Mammary epithelial cell (primary cell): ENCODE measurements at regions of chr20 and their contacts with region 1.

Region 1: GRCh38 chr20:44747166-44748004 is 1.7 kb downstream of the KCNK15 start:
- DNase-seq: peak; percentile 87
- H3K4me3 ChIP-seq: no peak overlapping the region
- H3K27ac ChIP-seq: no peak overlapping the region
- H3K4me1 ChIP-seq: peaks cover 18% of the 10 kb centered on the region
- H3K27me3 ChIP-seq: peaks cover 7% of the 10 kb centered on the region
- CTCF ChIP-seq: peak; percentile 77 to 79

Region 2: DNA sequence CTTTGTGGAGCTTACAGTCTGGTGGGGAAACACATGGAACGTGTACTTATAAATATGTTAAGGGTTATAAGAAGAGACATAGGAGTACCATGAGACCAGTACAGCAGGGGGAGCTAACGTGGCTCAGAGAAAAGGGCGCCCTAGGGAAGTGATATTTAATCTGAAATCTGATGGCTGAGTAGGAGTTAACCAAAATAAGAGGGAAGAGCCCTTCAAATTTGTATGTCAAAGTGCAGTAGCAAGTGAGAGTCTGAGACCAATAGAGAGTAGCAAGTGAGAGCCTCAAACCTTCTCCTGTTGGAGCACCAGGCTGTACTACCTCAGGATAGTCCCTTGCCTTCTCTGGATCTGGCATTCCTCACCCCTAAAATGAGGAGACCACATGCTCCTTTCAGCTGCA is 171.1 kb before region 1 on chr20:
- CTCF ChIA-PET with region 1: no interaction called
- dilution Hi-C with region 1: no loop called
- in situ Hi-C with region 1: no loop called
- intact Hi-C with region 1: no loop called
- DNase-seq: no peak
- H3K4me3 ChIP-seq: no peak overlapping the region
- H3K27ac ChIP-seq: peak overlapping the region; percentile 13
- H3K4me1 ChIP-seq: peaks cover 24% of the 10 kb centered on the region
- H3K27me3 ChIP-seq: no peaks in the 10 kb centered on the region
- CTCF ChIP-seq: no peak

Region 3: DNA sequence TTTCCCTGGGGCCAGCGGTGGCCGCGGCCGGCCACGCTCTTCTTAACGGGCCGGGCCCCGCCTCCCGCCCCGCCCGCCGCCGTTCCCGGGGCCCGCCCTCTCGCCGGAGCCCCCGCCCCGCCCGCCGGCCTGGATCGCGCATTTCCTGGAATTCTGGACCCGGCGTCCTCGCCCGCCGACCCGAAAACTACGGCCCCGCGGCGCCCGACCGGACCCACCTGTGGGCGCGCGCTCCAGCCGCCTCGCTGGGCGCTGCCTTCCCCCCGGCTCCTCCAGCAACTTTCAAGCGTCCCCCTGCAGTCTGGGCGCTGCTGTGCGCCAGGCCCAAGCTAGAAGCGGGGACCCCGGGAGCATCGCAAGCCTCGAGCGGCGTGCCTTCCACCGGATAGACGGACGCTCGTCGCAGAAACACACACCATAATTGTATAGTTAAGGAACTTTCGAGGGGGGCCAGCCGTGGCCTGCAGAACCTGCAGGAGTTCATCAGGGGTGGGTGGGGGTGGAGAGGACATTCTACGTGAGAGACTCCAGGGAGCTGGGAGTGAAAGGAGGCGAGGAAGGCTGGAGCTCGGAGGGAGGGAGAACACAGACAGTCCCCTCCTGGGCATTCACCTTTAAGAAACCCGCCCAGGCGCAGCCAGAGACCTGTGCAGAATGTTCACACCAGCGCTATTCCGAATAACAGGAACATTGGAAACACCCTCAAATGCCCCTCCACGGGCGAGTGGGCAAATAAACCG is 95.5 kb before region 1 on chr20 and contains the start of gene ADA:
- CTCF ChIA-PET with region 1: no interaction called
- dilution Hi-C with region 1: loop called (anchors 5 kb)
- in situ Hi-C with region 1: no loop called
- intact Hi-C with region 1: no loop called
- DNase-seq: peak; percentile 63
- H3K4me3 ChIP-seq: peak within 1 kb of the TSS; percentile 60 to 90 (median 76)
- H3K27ac ChIP-seq: peak within 1 kb of the TSS; percentile 56
- H3K4me1 ChIP-seq: peaks cover 9% of the 10 kb centered on the region
- H3K27me3 ChIP-seq: no peaks in the 10 kb centered on the region
- CTCF ChIP-seq: no peak
- total RNA-seq, gene ADA: 4.2 to 10.5 TPM

Region 4: DNA sequence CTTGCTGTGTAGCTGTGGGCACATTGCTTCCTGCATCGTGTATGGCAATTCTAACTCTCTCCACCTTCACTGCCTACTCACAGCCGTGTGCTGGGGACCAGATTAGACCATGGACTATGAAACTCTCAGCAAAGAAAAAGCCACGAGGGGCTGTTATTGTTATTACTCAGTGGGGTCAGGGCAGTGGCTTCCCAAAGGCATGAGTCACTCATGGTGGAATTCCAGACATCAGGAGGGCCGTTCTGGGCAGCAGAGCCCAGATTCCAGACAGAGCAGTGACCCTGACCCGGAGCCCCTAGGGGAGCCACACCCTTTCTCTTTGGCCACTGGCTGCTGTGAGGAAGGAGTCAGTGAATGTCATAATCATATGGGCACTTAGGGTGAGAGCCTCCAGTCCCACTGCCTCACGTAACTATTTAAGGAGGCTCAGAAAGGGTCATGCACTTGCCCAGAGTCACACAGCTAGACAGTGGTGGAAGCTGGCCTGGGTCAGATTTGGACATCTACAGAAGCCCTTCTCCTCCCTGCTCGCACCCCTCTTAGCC is 54.4 kb before region 1 on chr20:
- CTCF ChIA-PET with region 1: no interaction called
- dilution Hi-C with region 1: no loop called
- in situ Hi-C with region 1: no loop called
- intact Hi-C with region 1: no loop called
- DNase-seq: peak; percentile 92
- H3K4me3 ChIP-seq: no peak overlapping the region
- H3K27ac ChIP-seq: peak overlapping the region; percentile 16
- H3K4me1 ChIP-seq: peaks cover 14% of the 10 kb centered on the region
- H3K27me3 ChIP-seq: no peaks in the 10 kb centered on the region
- CTCF ChIP-seq: no peak

Region 5: GRCh38 chr20:44720617-44720993 is 26.8 kb before region 1 on chr20:
- CTCF ChIA-PET with region 1: no interaction called
- dilution Hi-C with region 1: no loop called
- in situ Hi-C with region 1: no loop called
- intact Hi-C with region 1: no loop called
- DNase-seq: no peak
- H3K4me3 ChIP-seq: no peak overlapping the region
- H3K27ac ChIP-seq: peak overlapping the region; percentile 67
- H3K4me1 ChIP-seq: peaks cover 34% of the 10 kb centered on the region
- H3K27me3 ChIP-seq: no peaks in the 10 kb centered on the region
- CTCF ChIP-seq: no peak

Region 6: DNA sequence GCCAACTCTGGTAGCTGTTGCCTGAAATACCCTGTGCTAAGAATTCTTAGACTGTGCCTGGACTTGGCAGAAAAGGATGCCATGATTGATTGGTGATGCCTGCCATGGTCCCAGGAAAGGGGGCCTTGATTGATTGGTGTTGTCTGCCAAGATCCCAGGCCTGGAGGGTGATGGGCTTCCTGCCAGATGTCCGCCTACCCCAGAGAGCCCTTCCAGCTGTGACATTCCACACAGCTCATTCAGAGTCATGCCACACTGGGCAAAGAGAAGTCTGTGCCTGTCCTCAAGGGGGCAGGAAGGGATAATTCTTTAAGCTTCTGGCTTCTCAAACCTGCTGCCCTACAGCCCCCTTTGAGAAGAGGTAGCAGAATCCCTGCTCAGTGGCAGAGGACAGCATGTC is 38.4 kb after region 1 on chr20:
- CTCF ChIA-PET with region 1: interaction called, 6 read pairs
- dilution Hi-C with region 1: loop called (anchors 5 kb)
- in situ Hi-C with region 1: no loop called
- intact Hi-C with region 1: loop called (anchors 1 kb)
- DNase-seq: peak; percentile 35
- H3K4me3 ChIP-seq: no peak overlapping the region
- H3K27ac ChIP-seq: no peak overlapping the region
- H3K4me1 ChIP-seq: peaks cover 2% of the 10 kb centered on the region
- H3K27me3 ChIP-seq: peaks cover 2% of the 10 kb centered on the region
- CTCF ChIP-seq: peak in 1 of 2 donors; percentile 39

Region 7: DNA sequence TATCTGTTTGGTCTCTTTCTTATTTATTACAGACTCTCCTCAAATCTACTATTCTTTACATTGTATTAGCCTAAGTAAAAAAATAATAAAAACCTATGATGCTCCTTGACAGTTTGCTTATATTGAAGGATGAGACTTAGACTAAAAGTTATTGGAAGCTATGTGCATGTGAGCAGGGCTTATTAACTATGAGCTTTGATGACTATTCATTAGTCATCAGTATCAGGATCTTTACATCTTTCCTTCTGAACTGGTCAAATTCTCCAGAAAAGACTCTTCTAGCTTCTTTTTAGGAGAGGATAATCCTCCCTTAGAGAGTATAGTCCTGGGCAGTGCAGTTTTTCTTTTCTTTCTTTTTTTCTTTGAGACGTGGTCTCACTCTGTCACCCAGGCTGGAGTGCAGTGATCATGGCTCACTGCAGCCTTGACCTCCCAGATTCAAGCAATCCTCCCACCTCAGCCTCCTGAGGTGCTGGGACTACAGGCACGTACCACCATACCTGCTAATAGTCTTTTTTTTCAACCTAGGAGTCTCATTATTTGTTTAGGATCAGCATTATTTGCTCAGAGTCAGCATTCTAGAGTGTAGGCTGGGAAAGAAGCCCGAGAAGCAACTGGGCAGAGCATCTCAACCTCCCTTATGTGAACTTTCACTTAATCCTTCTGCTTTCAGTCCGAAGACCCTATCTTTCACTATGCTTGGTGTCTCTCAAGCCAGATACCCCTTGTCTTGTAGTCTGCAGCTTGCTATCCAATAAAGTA is 101.0 kb after region 1 on chr20:
- CTCF ChIA-PET with region 1: no interaction called
- dilution Hi-C with region 1: no loop called
- in situ Hi-C with region 1: no loop called
- intact Hi-C with region 1: no loop called
- DNase-seq: peak; percentile 23
- H3K4me3 ChIP-seq: no peak overlapping the region
- H3K27ac ChIP-seq: no peak overlapping the region
- H3K4me1 ChIP-seq: no peaks in the 10 kb centered on the region
- H3K27me3 ChIP-seq: no peaks in the 10 kb centered on the region
- CTCF ChIP-seq: no peak

Region 8: DNA sequence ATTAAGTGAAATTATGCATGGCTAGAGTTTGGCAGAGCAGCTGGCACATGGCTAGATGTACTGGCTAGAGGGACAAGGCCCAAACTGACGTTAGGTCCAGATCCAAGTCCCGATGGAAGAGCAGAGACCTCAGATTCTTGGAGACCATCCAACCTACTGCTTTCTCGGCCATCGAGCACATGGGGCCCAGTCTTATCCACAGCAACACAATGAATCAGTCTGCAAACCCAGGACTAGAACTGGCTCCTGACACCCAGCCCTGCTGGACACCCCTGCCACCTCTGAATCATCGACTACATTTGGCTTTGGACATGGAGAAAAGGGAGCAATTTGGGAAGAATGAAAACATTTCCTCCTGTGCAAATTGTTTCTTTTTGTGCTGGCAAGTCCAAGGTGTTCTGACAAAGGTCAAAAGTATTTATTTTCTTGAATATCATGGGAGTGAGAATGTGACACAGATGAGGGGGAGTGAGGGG is 114.2 kb after region 1 on chr20:
- CTCF ChIA-PET with region 1: interaction called, 5 read pairs
- dilution Hi-C with region 1: no loop called
- in situ Hi-C with region 1: loop called (anchors 5 to 10 kb)
- intact Hi-C with region 1: no loop called
- DNase-seq: peak; percentile 20
- H3K4me3 ChIP-seq: no peak overlapping the region
- H3K27ac ChIP-seq: no peak overlapping the region
- H3K4me1 ChIP-seq: peaks cover 3% of the 10 kb centered on the region
- H3K27me3 ChIP-seq: no peaks in the 10 kb centered on the region
- CTCF ChIP-seq: no peak

Region 9: DNA sequence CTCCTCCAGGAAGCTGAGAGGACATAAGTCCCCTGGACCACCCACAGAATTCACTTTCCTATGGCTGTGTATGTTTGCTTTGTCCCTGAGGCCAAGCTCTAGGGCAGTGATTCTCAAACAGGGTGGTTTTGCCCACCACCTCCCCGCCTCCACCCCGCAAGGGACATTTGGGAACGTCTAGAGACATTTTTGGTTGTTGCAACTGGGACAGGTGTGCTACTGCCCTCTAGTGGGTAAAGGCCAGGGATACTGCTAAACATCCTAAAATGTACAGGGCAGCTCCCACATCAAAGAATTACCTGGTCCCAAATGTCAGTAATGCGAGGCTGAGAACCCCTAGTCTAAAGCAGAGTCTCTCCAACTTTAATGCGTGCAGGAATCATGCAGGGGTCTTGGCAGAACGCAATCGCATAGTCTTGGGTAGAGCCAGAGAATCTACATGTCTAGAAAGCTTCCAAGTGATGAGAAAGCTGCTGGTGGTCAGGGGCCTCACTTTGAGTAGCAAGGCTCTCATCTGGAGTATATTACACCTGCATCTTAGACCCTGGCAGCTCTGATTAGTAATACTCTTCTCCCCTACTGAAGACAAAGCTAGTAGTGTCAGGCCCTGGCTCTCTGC is 348.5 kb after region 1 on chr20:
- CTCF ChIA-PET with region 1: no interaction called
- dilution Hi-C with region 1: no loop called
- in situ Hi-C with region 1: no loop called
- intact Hi-C with region 1: loop called (anchors 10 kb)
- DNase-seq: peak; percentile 44
- H3K4me3 ChIP-seq: no peak overlapping the region
- H3K27ac ChIP-seq: no peak overlapping the region
- H3K4me1 ChIP-seq: peaks cover 10% of the 10 kb centered on the region
- H3K27me3 ChIP-seq: no peaks in the 10 kb centered on the region
- CTCF ChIP-seq: peak; percentile 65 to 84